ENCODE measurements at regions of chr18 and their contacts with region 1.

Region 1: DNA sequence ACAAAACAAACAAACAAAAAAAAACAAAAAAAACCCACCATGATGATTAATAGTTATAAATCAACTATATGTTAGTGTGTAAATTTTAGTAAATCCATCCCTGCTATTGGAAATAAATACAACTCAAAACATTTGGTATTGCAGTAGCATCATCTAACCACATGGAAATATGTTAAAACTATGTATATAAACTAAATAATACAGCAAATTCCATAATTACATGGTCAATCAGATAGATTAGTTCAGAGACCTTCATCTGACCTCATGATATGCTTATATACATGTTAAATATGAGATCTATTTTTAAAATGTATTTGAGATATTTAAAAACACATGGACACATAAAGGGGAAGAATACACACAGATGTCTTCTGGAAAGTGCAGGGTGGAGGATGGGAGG is 384.2 kb downstream of the TMX3 start:
- DNase-seq: no peak
- ATAC-seq: no peak
- H3K4me3 ChIP-seq: no peak overlapping the region
- H3K27ac ChIP-seq: no peak overlapping the region
- H3K4me1 ChIP-seq: no peaks in the 10 kb centered on the region
- H3K27me3 ChIP-seq: no peaks in the 10 kb centered on the region
- CTCF ChIP-seq: no peak

Region 2: DNA sequence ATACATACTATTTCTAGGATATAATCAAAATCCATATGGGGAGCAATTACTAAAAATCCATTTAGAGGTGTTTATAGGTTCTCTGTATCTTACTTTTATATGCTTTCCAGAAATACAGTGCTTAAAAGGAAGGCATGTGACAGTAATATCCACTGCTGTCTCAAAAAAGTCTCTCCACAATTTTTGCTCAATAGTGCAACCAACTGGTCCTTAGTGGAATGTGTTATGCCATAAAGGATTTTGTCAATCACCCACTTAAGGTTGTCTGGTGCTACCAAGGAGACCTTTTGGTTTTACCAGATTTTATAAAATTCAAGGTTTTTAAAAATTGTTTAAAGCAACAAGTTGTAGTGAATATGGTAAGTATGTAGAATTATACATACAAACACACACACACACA is 485.6 kb before region 1 on chr18:
- intact Hi-C with region 1: no loop called
- DNase-seq: no peak
- ATAC-seq: no peak
- H3K4me3 ChIP-seq: no peak overlapping the region
- H3K27ac ChIP-seq: no peak overlapping the region
- H3K4me1 ChIP-seq: no peaks in the 10 kb centered on the region
- H3K27me3 ChIP-seq: no peaks in the 10 kb centered on the region
- CTCF ChIP-seq: no peak

Region 3: GRCh38 chr18:68316636-68317035 is 14.0 kb before region 1 on chr18:
- intact Hi-C with region 1: loop called in 1 of 10 experiments (anchors 1 kb)
- DNase-seq: no peak
- ATAC-seq: no peak
- H3K4me3 ChIP-seq: peak overlapping the region in 5 of 10 donors; percentile 14 to 28 (median 25)
- H3K27ac ChIP-seq: no peak overlapping the region
- H3K4me1 ChIP-seq: no peaks in the 10 kb centered on the region
- H3K27me3 ChIP-seq: no peaks in the 10 kb centered on the region
- CTCF ChIP-seq: no peak